ENCODE measurements at regions of chr5 and their contacts with region 1.

Region 1: DNA sequence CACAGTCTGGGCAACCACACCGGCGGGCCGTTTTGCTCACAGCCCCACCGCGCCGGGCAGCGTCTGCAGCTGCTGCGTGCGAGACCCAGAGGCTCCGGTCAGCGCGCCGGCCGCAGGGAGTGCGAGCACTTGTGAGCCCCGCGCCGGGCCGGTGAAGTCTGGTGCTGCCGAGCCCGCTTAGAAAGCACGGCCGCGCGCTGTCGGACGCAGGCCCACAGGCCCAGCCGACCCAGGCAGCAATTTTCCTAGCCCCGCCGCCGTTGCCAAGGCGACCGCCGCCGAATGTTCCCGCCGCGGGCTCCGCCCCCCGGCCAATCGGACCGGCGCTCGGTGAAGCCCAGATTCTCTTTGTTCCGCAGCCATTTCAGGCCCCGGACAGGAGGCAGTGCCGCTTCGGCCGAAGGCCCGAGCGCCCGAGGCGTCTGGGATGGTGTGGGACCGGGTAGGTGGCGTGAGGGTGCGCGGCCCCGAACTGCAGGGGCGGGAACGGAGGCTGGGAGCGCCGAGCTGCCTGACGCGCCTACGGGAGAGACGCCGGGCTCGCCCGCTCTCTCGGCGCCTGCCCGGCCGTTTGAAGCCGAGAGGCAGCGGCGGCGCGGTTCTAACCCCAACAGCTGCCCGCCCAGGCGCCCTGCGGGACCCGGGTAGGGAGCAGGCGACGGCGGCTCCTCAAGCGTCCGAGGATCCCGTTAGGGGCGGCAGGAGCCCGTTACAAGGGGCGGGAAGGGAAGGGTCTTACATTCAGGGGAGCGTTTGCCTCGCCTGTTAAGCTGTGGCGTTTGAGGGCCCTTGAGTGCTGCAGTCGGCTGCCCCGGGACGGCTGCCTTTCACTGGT is at the start of gene TNPO1:
- DNase-seq: peak; percentile 88 to 91
- ATAC-seq: peak; percentile 87 to 89
- H3K4me3 ChIP-seq: peak within 1 kb of the TSS; percentile 71 to 90 (median 88)
- H3K27ac ChIP-seq: peak within 1 kb of the TSS; percentile 96 to 98 (median 98)
- H3K4me1 ChIP-seq: peaks cover 25 to 36% of the 10 kb centered on the region in 2 donors
- H3K27me3 ChIP-seq: no peaks in the 10 kb centered on the region
- CTCF ChIP-seq: no peak
- POLR2A ChIP-seq: peak; percentile 96 to 99
- total RNA-seq, gene TNPO1: 96.8 to 130 (median 111) TPM

Region 2: GRCh38 chr5:72138943-72139521 is 677.5 kb before region 1 on chr5:
- in situ Hi-C with region 1: loop called in 1 of 4 experiments (anchors 25 kb)
- intact Hi-C with region 1: no loop called
- DNase-seq: no peak
- ATAC-seq: no peak
- H3K4me3 ChIP-seq: no peak overlapping the region
- H3K27ac ChIP-seq: peak overlapping the region in 1 of 4 donors; percentile 3
- H3K4me1 ChIP-seq: peaks cover 0 to 4% of the 10 kb centered on the region in 2 donors
- H3K27me3 ChIP-seq: no peaks in the 10 kb centered on the region
- CTCF ChIP-seq: no peak
- POLR2A ChIP-seq: no peak

Region 3: GRCh38 chr5:72378636-72379290 is 437.8 kb before region 1 on chr5:
- in situ Hi-C with region 1: loop called in 3 of 4 experiments (anchors 10 to 25 kb)
- intact Hi-C with region 1: no loop called
- DNase-seq: peak; percentile 69 to 78
- ATAC-seq: peak; percentile 86 to 88
- H3K4me3 ChIP-seq: no peak overlapping the region
- H3K27ac ChIP-seq: peak overlapping the region; percentile 62 to 81 (median 76)
- H3K4me1 ChIP-seq: peaks cover 23 to 30% of the 10 kb centered on the region in 2 donors
- H3K27me3 ChIP-seq: no peaks in the 10 kb centered on the region
- CTCF ChIP-seq: no peak
- POLR2A ChIP-seq: no peak

Region 4: GRCh38 chr5:72618708-72619107 is 197.8 kb before region 1 on chr5:
- in situ Hi-C with region 1: loop called (anchors 10 to 25 kb)
- intact Hi-C with region 1: loop called (anchors 2 kb)
- DNase-seq: peak; percentile 76 to 80
- ATAC-seq: peak; percentile 94 to 96
- H3K4me3 ChIP-seq: no peak overlapping the region
- H3K27ac ChIP-seq: peak overlapping the region; percentile 80 to 92 (median 87)
- H3K4me1 ChIP-seq: peaks cover 40 to 53% of the 10 kb centered on the region in 2 donors
- H3K27me3 ChIP-seq: no peaks in the 10 kb centered on the region
- CTCF ChIP-seq: no peak
- POLR2A ChIP-seq: peak; percentile 9 to 45

Region 5: DNA sequence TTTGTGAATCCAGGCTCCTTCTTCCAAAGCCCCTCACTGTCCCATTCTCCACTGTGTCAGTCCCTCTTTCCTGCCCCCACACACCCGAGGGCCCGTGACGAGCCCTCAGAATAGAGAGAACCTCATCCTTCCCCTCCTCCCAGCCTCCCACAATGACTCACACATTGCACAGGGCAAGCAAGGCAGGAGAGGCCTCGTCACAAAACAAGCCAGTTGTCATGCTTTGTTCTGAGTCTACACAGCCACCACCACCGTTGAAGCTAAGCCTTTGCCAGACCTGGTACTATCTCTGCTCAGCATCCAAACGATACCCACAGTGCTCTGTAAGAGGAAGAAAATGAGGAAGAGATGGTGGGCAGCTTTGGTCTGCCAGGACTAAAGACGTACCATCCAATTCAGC is 167.1 kb before region 1 on chr5:
- in situ Hi-C with region 1: no loop called
- intact Hi-C with region 1: no loop called
- DNase-seq: no peak
- ATAC-seq: peak in 1 of 2 donors; percentile 50
- H3K4me3 ChIP-seq: no peak overlapping the region
- H3K27ac ChIP-seq: no peak overlapping the region
- H3K4me1 ChIP-seq: peaks cover 6 to 17% of the 10 kb centered on the region in 2 donors
- H3K27me3 ChIP-seq: no peaks in the 10 kb centered on the region
- CTCF ChIP-seq: no peak
- POLR2A ChIP-seq: no peak

Region 6: DNA sequence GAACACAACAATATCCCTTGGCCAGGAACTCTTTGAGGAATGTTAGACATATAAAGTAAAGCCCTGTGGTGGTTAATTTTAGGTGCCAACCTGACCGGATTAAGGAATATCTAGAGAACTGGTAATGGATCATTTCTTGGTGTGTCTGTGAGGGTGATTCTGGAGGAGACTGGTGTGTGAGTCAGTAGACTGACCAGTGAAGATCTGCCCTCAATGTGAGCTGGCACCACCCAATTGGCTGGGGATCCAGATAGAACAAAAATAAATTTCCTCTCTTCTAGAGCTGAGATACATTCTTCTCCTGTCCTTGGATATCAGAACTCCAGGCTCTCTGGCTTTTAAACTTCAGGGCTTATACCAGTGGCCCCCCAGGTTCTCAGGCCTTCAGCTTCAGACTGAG is 56.3 kb before region 1 on chr5:
- in situ Hi-C with region 1: no loop called
- intact Hi-C with region 1: no loop called
- DNase-seq: no peak
- ATAC-seq: no peak
- H3K4me3 ChIP-seq: no peak overlapping the region
- H3K27ac ChIP-seq: no peak overlapping the region
- H3K4me1 ChIP-seq: no peaks in the 10 kb centered on the region
- H3K27me3 ChIP-seq: no peaks in the 10 kb centered on the region
- CTCF ChIP-seq: no peak
- POLR2A ChIP-seq: no peak

Region 7: DNA sequence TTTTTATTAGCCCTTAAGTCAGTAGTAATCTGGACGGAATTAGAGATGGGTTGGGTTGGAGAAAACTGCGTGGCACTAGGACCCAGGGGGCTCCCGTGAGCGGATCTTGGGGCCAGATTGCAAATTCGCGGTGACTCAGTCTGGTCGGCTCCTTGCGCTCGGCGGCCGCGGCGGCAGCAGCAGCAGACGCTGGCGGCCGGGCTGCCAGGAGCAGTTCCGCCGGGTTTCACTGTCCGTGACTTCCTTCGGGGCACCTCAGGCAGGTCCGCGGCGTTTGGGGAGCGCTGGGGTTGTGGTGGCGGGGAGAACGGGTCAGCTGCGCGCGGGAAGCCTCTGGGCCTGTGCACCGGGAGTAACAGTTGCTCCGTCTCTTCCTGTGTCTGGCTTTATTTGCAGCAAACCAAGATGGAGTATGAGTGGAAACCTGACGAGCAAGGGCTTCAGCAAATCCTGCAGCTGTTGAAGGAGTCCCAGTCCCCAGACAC is 31.5 kb after region 1 on chr5:
- in situ Hi-C with region 1: no loop called
- intact Hi-C with region 1: loop called (anchors 1 kb)
- DNase-seq: peak; percentile 87 to 92
- ATAC-seq: peak; percentile 89 to 90
- H3K4me3 ChIP-seq: peak overlapping the region; percentile 81 to 92 (median 91)
- H3K27ac ChIP-seq: peak overlapping the region; percentile 90 to 97 (median 96)
- H3K4me1 ChIP-seq: peaks cover 76 to 83% of the 10 kb centered on the region in 2 donors
- H3K27me3 ChIP-seq: no peaks in the 10 kb centered on the region
- CTCF ChIP-seq: peak in 1 of 5 experiments; percentile 8
- POLR2A ChIP-seq: peak; percentile 94 to 95

Region 8: DNA sequence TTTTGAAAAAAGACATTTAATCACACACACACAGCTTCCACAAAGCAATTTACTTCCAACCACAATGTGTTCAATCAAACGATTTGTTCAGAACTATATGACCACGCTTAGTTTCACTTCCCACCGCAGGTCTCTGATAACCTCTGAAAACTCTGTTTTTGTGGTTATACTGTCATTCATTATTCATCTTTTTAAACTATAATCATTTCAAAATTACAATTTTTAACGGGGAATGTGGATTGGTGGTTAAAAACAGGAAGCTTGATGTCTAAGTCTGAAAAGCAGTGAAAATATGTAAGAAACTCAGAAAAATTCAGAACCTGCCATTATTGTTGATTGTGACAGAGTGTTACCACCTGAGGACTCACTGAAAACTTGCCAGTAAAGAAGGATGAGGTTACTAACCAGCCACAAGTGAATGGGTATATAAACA is 343.7 kb after region 1 on chr5:
- in situ Hi-C with region 1: no loop called
- intact Hi-C with region 1: no loop called
- DNase-seq: no peak
- ATAC-seq: no peak
- H3K4me3 ChIP-seq: no peak overlapping the region
- H3K27ac ChIP-seq: no peak overlapping the region
- H3K4me1 ChIP-seq: no peaks in the 10 kb centered on the region
- H3K27me3 ChIP-seq: no peaks in the 10 kb centered on the region
- CTCF ChIP-seq: no peak
- POLR2A ChIP-seq: no peak

Measured in gastrocnemius medialis (tissue), 4 donors.